CD4-positive, alpha-beta memory T cell (primary cell): ENCODE measurements at regions of chr6 and their contacts with region 1.

Region 1: GRCh38 chr6:12233693-12234571 is 56.2 kb upstream of the EDN1 start:
- DNase-seq: peak; percentile 56 to 71 (median 63)
- H3K4me3 ChIP-seq: no peak overlapping the region
- H3K4me3 Mint-ChIP-seq: peak overlapping the region in 6 of 8 donors; percentile 19 to 55 (median 38)
- H3K27ac ChIP-seq: no peak overlapping the region
- H3K27ac Mint-ChIP-seq: peak overlapping the region; percentile 1 to 86 (median 51)
- H3K4me1 ChIP-seq: peaks cover 19% of the 10 kb centered on the region
- H3K4me1 Mint-ChIP-seq: peaks cover 21 to 22% (median 22%) of the 10 kb centered on the region in 4 donors
- H3K27me3 ChIP-seq: no peaks in the 10 kb centered on the region
- H3K27me3 Mint-ChIP-seq: no peaks in the 10 kb centered on the region

Region 2: GRCh38 chr6:11654876-11655275 is 579.1 kb before region 1 on chr6:
- CTCF ChIA-PET with region 1: interaction called, 65 read pairs
- POLR2A ChIA-PET with region 1: interaction called, 6 read pairs
- intact Hi-C with region 1: loop called (anchors 1 kb)
- DNase-seq: no peak
- H3K4me3 ChIP-seq: no peak overlapping the region
- H3K4me3 Mint-ChIP-seq: no peak overlapping the region
- H3K27ac ChIP-seq: no peak overlapping the region
- H3K27ac Mint-ChIP-seq: no peak overlapping the region
- H3K4me1 ChIP-seq: no peaks in the 10 kb centered on the region
- H3K4me1 Mint-ChIP-seq: peaks cover 0 to 7% (median 2%) of the 10 kb centered on the region in 4 donors
- H3K27me3 ChIP-seq: no peaks in the 10 kb centered on the region
- H3K27me3 Mint-ChIP-seq: peaks cover 8 to 9% of the 10 kb centered on the region in 2 donors

Region 3: DNA sequence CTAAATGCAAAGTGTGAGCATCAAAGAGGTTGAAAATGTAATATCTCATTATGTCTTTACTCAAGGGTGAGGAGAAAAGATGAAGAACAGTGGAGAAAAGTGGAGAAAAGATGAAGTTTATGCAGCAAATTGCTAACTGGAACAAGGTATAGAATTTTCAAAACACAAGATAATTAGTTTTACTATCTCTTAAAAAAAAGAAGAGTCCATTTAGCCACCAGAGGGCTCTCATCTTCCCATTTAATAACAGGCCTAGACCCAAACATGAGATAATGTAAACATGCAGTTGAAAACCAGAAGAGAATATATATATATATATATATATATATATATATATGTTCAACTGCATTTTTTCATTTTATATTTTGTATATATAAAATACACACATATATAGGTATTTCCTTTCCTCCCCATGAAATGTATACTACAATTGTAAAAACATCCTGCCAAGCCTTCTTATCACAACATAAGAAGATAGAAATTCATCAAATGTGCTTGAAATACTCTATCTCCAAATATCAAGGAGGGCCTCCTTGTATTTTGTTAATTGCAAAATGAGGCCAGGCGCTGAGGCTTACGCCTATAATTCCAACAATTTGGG is 533.7 kb before region 1 on chr6:
- CTCF ChIA-PET with region 1: interaction called, 34 read pairs
- POLR2A ChIA-PET with region 1: no interaction called
- intact Hi-C with region 1: loop called (anchors 1 kb)
- DNase-seq: peak in 3 of 5 donors; percentile 38 to 51 (median 42)
- H3K4me3 ChIP-seq: no peak overlapping the region
- H3K4me3 Mint-ChIP-seq: no peak overlapping the region
- H3K27ac ChIP-seq: no peak overlapping the region
- H3K27ac Mint-ChIP-seq: peak overlapping the region in 1 of 7 donors; percentile 41
- H3K4me1 ChIP-seq: no peaks in the 10 kb centered on the region
- H3K4me1 Mint-ChIP-seq: peaks cover 0 to 8% (median 4%) of the 10 kb centered on the region in 4 donors
- H3K27me3 ChIP-seq: no peaks in the 10 kb centered on the region
- H3K27me3 Mint-ChIP-seq: no peaks in the 10 kb centered on the region

Region 4: GRCh38 chr6:11822346-11822745 is 411.6 kb before region 1 on chr6:
- CTCF ChIA-PET with region 1: interaction called, 6 read pairs
- POLR2A ChIA-PET with region 1: no interaction called
- intact Hi-C with region 1: loop called (anchors 1 kb)
- DNase-seq: peak in 3 of 5 donors; percentile 3 to 8 (median 6)
- H3K4me3 ChIP-seq: no peak overlapping the region
- H3K4me3 Mint-ChIP-seq: no peak overlapping the region
- H3K27ac ChIP-seq: no peak overlapping the region
- H3K27ac Mint-ChIP-seq: peak overlapping the region in 1 of 7 donors; percentile 25
- H3K4me1 ChIP-seq: no peaks in the 10 kb centered on the region
- H3K4me1 Mint-ChIP-seq: peaks cover 0 to 4% (median 2%) of the 10 kb centered on the region in 4 donors
- H3K27me3 ChIP-seq: no peaks in the 10 kb centered on the region
- H3K27me3 Mint-ChIP-seq: peaks cover 0 to 5% of the 10 kb centered on the region in 2 donors

Region 5: DNA sequence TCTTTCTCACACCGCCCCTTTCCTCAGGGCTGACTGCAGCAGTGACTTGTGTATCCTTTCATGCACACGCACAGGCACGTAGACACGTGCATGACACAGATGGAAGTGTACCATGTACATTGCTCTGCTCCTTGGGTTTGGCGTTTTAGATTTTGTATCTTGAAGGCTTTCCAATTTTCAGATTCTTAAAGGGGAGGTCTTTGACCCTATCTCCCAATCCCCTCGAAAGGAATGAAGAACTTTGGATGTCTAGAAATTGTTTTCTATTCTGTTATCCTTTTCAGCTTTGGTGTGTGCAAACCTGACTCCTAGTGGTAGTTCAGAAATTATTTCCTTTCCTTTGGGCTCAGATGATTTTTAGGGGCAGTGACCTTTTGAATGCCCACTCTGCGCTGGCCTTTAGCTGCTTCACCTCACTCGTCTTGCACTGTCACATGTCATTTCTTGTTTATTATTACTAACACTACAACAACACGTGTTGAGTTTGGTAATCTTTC is 158.8 kb before region 1 on chr6:
- CTCF ChIA-PET with region 1: no interaction called
- POLR2A ChIA-PET with region 1: no interaction called
- intact Hi-C with region 1: loop called (anchors 1 kb)
- DNase-seq: peak in 4 of 5 donors; percentile 5 to 26 (median 12)
- H3K4me3 ChIP-seq: no peak overlapping the region
- H3K4me3 Mint-ChIP-seq: no peak overlapping the region
- H3K27ac ChIP-seq: no peak overlapping the region
- H3K27ac Mint-ChIP-seq: peak overlapping the region in 2 of 7 donors; percentile 16 to 63
- H3K4me1 ChIP-seq: peaks cover 12% of the 10 kb centered on the region
- H3K4me1 Mint-ChIP-seq: peaks cover 20 to 36% (median 27%) of the 10 kb centered on the region in 4 donors
- H3K27me3 ChIP-seq: no peaks in the 10 kb centered on the region
- H3K27me3 Mint-ChIP-seq: no peaks in the 10 kb centered on the region

Region 6: DNA sequence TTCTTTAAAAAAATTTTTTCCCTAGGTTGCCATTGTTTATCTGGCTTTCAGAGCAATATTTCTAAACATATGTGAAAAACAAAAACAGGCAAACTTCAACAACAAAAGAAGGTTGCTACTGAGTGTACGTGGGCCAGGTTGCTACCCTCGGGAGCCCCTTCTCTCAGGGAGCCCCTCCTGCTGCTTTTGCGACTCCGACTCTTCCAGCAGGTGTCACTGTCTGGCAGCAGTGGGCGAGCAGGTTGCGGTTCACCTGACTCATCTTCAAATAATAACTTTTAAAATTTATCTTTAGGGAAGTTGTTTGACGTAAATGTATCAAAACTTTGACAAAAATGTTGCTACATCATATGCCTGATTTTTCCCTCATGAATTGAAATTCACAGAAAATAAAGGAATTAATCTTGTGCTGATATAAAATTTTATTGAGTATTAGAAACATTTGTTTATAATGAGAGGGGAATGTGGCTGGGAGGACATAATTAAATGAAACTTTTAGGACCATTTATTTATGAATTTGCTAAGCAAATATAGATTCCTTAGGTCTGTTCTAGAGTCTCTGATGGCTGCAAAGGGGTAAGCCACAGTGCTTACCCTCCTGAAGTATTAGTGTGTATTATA is 83.0 kb before region 1 on chr6:
- CTCF ChIA-PET with region 1: interaction called, 3 read pairs
- POLR2A ChIA-PET with region 1: no interaction called
- intact Hi-C with region 1: loop called (anchors 1 kb)
- DNase-seq: peak in 3 of 5 donors; percentile 20 to 23 (median 23)
- H3K4me3 ChIP-seq: no peak overlapping the region
- H3K4me3 Mint-ChIP-seq: no peak overlapping the region
- H3K27ac ChIP-seq: no peak overlapping the region
- H3K27ac Mint-ChIP-seq: no peak overlapping the region
- H3K4me1 ChIP-seq: peaks cover 8% of the 10 kb centered on the region
- H3K4me1 Mint-ChIP-seq: peaks cover 0 to 16% (median 12%) of the 10 kb centered on the region in 4 donors
- H3K27me3 ChIP-seq: no peaks in the 10 kb centered on the region
- H3K27me3 Mint-ChIP-seq: no peaks in the 10 kb centered on the region

Region 7: GRCh38 chr6:12258196-12259075 is 24.5 kb after region 1 on chr6:
- CTCF ChIA-PET with region 1: no interaction called
- POLR2A ChIA-PET with region 1: no interaction called
- intact Hi-C with region 1: no loop called
- DNase-seq: no peak
- H3K4me3 ChIP-seq: no peak overlapping the region
- H3K4me3 Mint-ChIP-seq: no peak overlapping the region
- H3K27ac ChIP-seq: no peak overlapping the region
- H3K27ac Mint-ChIP-seq: no peak overlapping the region
- H3K4me1 ChIP-seq: no peaks in the 10 kb centered on the region
- H3K4me1 Mint-ChIP-seq: no peaks in the 10 kb centered on the region
- H3K27me3 ChIP-seq: no peaks in the 10 kb centered on the region
- H3K27me3 Mint-ChIP-seq: peaks cover 10 to 17% of the 10 kb centered on the region in 2 donors